ENCODE measurements at regions of chr12 and their contacts with region 1.

Region 1: DNA sequence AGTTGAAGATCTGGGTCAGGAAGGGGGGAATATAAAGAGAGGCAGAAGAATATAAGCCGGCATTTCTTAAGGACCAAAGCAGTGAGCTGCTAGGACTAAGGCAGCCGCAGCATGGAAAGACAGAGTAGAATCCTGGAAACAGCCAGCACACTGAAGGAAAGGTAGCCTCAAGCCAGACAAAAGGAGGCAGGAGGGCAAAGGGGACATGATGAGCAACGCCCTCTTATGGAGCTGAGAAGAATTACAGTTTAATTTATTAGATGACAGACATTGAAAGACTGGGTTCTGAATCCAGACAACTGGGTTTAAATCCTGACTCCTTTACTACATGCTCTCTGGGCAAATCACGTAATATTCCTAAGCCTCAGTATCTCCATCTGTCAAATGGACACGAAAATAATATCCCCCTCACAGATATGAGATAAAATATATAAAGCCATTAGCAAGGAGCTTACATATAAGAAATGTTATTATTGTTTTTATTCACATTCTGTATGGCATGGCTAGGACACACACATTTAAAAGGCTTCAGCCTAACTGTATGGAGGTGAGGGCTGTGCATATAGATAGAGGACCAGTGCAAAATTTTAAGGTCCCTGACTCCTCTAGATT is 8.1 kb upstream of the PCED1B start:
- DNase-seq: no peak
- ATAC-seq: peak; percentile 54
- H3K4me3 ChIP-seq: no peak overlapping the region
- H3K27ac ChIP-seq: no peak overlapping the region
- H3K4me1 ChIP-seq: peaks cover 3% of the 10 kb centered on the region; the same call in 1 of the 2 replicates
- H3K27me3 ChIP-seq: no peaks in the 10 kb centered on the region
- CTCF ChIP-seq: peak; percentile 82

Region 2: GRCh38 chr12:46946137-46946536 is 125.2 kb before region 1 on chr12:
- CTCF ChIA-PET with region 1: no interaction called
- POLR2A ChIA-PET with region 1: no interaction called
- in situ Hi-C with region 1: no loop called
- intact Hi-C with region 1: no loop called
- DNase-seq: no peak
- ATAC-seq: no peak
- H3K4me3 ChIP-seq: no peak overlapping the region
- H3K27ac ChIP-seq: no peak overlapping the region
- H3K4me1 ChIP-seq: 0 out of 2 replicates have a peak, but pooled peaks cover 2% of the 10 kb centered on the region
- H3K27me3 ChIP-seq: no peaks in the 10 kb centered on the region
- CTCF ChIP-seq: no peak

Region 3: GRCh38 chr12:46977871-46978375 is 93.4 kb before region 1 on chr12:
- CTCF ChIA-PET with region 1: interaction called, 13 read pairs
- POLR2A ChIA-PET with region 1: no interaction called
- in situ Hi-C with region 1: no loop called
- intact Hi-C with region 1: no loop called
- DNase-seq: no peak
- ATAC-seq: no peak
- H3K4me3 ChIP-seq: no peak overlapping the region
- H3K27ac ChIP-seq: no peak overlapping the region
- H3K4me1 ChIP-seq: no peaks in the 10 kb centered on the region
- H3K27me3 ChIP-seq: no peaks in the 10 kb centered on the region
- CTCF ChIP-seq: no peak

Region 4: DNA sequence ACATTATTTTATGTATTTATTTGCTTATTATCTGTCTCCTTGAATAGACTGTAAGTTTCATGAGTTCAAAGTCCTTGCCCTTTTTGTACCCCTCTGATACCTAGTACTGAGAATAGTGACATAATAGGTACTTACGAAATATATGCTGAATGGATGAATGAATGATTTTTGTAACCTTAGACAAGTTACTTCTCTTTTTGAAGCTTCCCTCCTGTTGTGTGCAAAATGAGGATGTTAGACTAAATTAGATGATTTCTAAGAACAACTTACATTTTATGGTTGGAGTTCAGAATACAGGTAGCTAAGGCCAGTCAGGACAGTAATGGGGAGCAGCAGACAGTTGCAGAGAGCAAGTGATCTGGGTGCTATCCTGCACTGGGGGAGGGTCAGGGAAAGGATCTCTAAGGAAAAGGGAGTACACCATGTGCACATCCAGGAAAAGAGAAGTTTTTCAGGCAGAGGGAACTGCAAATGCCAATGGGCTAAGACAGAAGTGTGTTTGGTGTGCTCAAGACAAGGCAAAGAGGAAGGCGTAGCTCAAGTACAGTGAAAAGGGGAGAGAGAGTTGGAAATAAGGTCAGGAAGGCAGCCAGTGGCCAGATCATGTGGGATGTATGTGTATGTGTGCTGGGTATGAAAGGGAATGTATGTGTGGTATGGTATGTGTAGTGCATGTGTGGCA is 67.8 kb after region 1 on chr12:
- CTCF ChIA-PET with region 1: no interaction called
- POLR2A ChIA-PET with region 1: no interaction called
- in situ Hi-C with region 1: no loop called
- intact Hi-C with region 1: no loop called
- DNase-seq: no peak
- ATAC-seq: no peak
- H3K4me3 ChIP-seq: no peak overlapping the region
- H3K27ac ChIP-seq: no peak overlapping the region
- H3K4me1 ChIP-seq: no peaks in the 10 kb centered on the region
- H3K27me3 ChIP-seq: no peaks in the 10 kb centered on the region
- CTCF ChIP-seq: no peak